IMR-90 (cell line): ENCODE measurements at regions of chr2 and their contacts with region 1.

Region 1: GRCh38 chr2:72887754-72888437 is 688 bp downstream of the SPR start:
- DNase-seq: peak; percentile 84
- ATAC-seq: peak; percentile 78
- H3K4me3 ChIP-seq: peak overlapping the region; percentile 62
- H3K27ac ChIP-seq: peak overlapping the region; percentile 31; the same call in 1 of the 2 replicates
- H3K4me1 ChIP-seq: peaks cover 3% of the 10 kb centered on the region; the same call in 1 of the 2 replicates
- H3K27me3 ChIP-seq: no peaks in the 10 kb centered on the region
- CTCF ChIP-seq: peak; percentile 96
- POLR2A ChIP-seq: no peak
- RAD21 ChIP-seq: peak; percentile 54

Region 2: DNA sequence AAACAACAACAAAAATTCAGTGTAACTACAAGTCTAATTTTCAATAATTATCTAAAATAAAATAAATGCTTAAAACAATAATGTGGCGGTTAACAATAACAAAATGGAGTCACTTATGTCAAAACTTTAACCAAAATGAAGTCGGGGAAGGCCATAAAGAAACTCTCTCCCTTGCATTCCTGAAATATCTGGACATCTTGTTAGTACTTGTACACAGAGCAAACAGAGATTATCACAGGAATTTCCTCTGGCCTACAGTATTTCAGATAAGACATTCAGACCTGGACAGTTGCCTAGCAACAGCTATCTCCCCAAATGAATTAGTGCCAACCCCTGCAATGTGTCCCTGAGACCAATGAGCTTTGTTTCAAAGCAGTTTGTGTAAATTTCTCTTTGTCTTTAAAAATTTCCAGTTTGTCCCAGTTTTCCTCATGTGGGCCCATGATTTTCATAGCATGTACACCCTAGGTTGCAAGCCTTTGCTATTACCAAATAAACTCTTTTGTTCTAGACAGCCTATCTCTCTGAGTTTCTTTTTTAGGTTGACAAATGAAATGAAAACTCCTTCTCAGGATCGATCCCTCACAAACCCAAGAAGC is 130.6 kb before region 1 on chr2:
- CTCF ChIA-PET with region 1: no interaction called
- POLR2A ChIA-PET with region 1: no interaction called
- dilution Hi-C with region 1: no loop called
- in situ Hi-C with region 1: no loop called
- intact Hi-C with region 1: no loop called
- DNase-seq: peak; percentile 76
- ATAC-seq: peak; percentile 90
- H3K4me3 ChIP-seq: no peak overlapping the region
- H3K27ac ChIP-seq: no peak overlapping the region
- H3K4me1 ChIP-seq: peaks cover 4% of the 10 kb centered on the region
- H3K27me3 ChIP-seq: no peaks in the 10 kb centered on the region
- CTCF ChIP-seq: no peak
- POLR2A ChIP-seq: no peak
- RAD21 ChIP-seq: no peak

Region 3: GRCh38 chr2:72770879-72771461 is 116.9 kb before region 1 on chr2:
- CTCF ChIA-PET with region 1: no interaction called
- POLR2A ChIA-PET with region 1: no interaction called
- dilution Hi-C with region 1: no loop called
- in situ Hi-C with region 1: no loop called
- intact Hi-C with region 1: loop called (anchors 1 kb)
- DNase-seq: peak; percentile 74
- ATAC-seq: no peak
- H3K4me3 ChIP-seq: no peak overlapping the region
- H3K27ac ChIP-seq: no peak overlapping the region
- H3K4me1 ChIP-seq: no peaks in the 10 kb centered on the region
- H3K27me3 ChIP-seq: no peaks in the 10 kb centered on the region
- CTCF ChIP-seq: peak; percentile 92
- POLR2A ChIP-seq: no peak
- RAD21 ChIP-seq: peak; percentile 94

Region 4: GRCh38 chr2:72973566-72974435 is 85.9 kb after region 1 on chr2:
- CTCF ChIA-PET with region 1: interaction called, 8 read pairs
- POLR2A ChIA-PET with region 1: no interaction called
- dilution Hi-C with region 1: no loop called
- in situ Hi-C with region 1: loop called (anchors 5 kb)
- intact Hi-C with region 1: loop called (anchors 1 kb)
- DNase-seq: peak; percentile 58
- ATAC-seq: peak; percentile 99
- H3K4me3 ChIP-seq: no peak overlapping the region
- H3K27ac ChIP-seq: no peak overlapping the region
- H3K4me1 ChIP-seq: no peaks in the 10 kb centered on the region
- H3K27me3 ChIP-seq: no peaks in the 10 kb centered on the region
- CTCF ChIP-seq: peak; percentile 77
- POLR2A ChIP-seq: no peak
- RAD21 ChIP-seq: peak; percentile 72

Region 5: DNA sequence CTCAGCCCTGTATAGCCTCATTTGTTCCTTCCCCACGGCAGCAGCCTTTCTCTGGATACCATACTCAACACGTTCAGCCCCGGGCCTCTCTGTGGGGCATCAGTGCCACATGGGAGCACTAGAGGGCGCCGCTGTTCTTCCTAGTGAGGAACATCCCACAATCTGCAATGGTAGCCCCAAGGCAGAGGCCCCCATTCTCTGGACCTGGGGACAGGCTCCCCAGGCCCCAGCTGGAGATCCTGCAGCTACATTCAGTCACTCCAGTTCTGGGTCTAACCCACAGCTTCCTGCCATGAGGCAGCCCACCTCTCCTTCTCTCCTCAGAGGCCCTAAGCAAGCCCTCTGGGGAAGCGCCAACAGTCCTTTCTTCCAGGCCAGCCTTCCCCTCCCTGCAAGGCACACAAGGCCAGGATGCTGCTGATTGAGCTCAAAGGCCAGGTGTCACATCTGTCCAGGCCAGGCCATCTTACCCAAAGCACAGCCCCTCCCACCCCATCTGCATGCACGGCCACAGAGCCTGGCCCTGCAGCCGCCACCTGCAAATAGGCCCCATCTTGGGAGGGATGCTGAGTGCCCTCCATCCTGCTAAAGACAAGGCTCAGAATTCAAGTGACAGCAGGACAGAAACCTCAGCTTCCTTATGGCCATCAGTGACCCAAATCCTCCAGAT is 197.9 kb after region 1 on chr2:
- CTCF ChIA-PET with region 1: interaction called, 7 read pairs
- POLR2A ChIA-PET with region 1: no interaction called
- dilution Hi-C with region 1: no loop called
- in situ Hi-C with region 1: no loop called
- intact Hi-C with region 1: loop called (anchors 2 kb)
- DNase-seq: peak; percentile 63
- ATAC-seq: peak; percentile 69
- H3K4me3 ChIP-seq: no peak overlapping the region
- H3K27ac ChIP-seq: peak overlapping the region; percentile 26; the same call in 1 of the 2 replicates
- H3K4me1 ChIP-seq: peaks cover 31% of the 10 kb centered on the region
- H3K27me3 ChIP-seq: no peaks in the 10 kb centered on the region
- CTCF ChIP-seq: peak; percentile 95
- POLR2A ChIP-seq: 0 out of 2 replicates have a peak, but pooled peaks have one; percentile 35
- RAD21 ChIP-seq: peak; percentile 97

Region 6: DNA sequence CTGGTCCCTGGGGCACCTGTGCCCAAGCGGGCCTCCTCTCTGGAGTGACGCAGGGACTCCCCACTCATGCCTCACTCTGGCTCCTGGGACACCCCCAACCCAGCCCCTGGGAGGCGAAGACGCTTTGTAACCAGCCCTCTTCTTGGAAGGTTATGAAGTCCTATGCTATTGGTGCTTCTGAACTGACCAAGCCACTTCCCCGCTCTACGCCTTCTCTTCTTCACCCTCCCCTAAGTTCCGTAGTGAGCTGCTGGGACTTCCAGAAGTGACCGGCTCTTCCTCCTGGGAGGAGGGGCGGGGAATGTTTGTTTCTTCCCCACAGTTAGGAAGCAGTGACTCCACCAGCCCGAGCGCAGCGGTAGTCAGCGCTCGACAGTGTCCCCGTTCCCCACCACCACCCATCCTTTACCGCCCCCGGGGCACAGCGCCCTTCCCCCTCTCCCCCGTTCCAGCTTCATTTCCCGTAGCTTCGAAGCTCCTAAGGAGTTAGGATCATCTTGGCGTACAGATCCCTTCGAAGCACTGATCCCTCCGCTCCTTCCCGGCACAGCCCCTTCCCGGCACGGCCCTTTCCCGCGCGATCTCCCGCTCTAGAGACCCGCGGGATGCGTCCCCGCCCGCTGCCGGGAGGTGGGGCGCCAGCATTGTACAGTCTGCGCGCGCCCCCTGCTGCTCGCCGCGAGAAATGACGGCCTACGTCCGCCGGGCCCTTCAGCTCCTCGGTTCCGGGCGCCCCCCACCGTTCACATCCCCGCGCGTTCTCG is 289.2 kb after region 1 on chr2:
- CTCF ChIA-PET with region 1: interaction called, 15 read pairs
- POLR2A ChIA-PET with region 1: no interaction called
- dilution Hi-C with region 1: no loop called
- in situ Hi-C with region 1: no loop called
- intact Hi-C with region 1: loop called (anchors 1 kb)
- DNase-seq: peak; percentile 76
- ATAC-seq: peak; percentile 98
- H3K4me3 ChIP-seq: peak overlapping the region; percentile 72
- H3K27ac ChIP-seq: peak overlapping the region; percentile 48; the same call in 1 of the 2 replicates
- H3K4me1 ChIP-seq: 0 out of 2 replicates have a peak, but pooled peaks cover 2% of the 10 kb centered on the region
- H3K27me3 ChIP-seq: peaks cover 48% of the 10 kb centered on the region
- CTCF ChIP-seq: peak; percentile 99
- POLR2A ChIP-seq: no peak
- RAD21 ChIP-seq: peak; percentile 92

Region 7: GRCh38 chr2:73717251-73717606 is 829.3 kb after region 1 on chr2:
- CTCF ChIA-PET with region 1: no interaction called
- POLR2A ChIA-PET with region 1: no interaction called
- dilution Hi-C with region 1: no loop called
- in situ Hi-C with region 1: no loop called
- intact Hi-C with region 1: no loop called
- DNase-seq: no peak
- ATAC-seq: peak; percentile 16; the same call in 1 of the 2 replicates
- H3K4me3 ChIP-seq: no peak overlapping the region
- H3K27ac ChIP-seq: no peak overlapping the region
- H3K4me1 ChIP-seq: no peaks in the 10 kb centered on the region
- H3K27me3 ChIP-seq: no peaks in the 10 kb centered on the region
- CTCF ChIP-seq: no peak
- POLR2A ChIP-seq: no peak
- RAD21 ChIP-seq: no peak